Tibial artery (tissue), 4 donors: ENCODE measurements at regions of chr10 and their contacts with region 1.

Region 1: GRCh38 chr10:47311932-47312662 is 10.2 kb upstream of the GDF2 start:
- DNase-seq: peak; percentile 88 to 89
- H3K4me3 ChIP-seq: no peak overlapping the region
- H3K27ac ChIP-seq: no peak overlapping the region
- H3K4me1 ChIP-seq: peaks cover 0 to 10% (median 3%) of the 10 kb centered on the region in 4 donors
- H3K27me3 ChIP-seq: no peaks in the 10 kb centered on the region
- CTCF ChIP-seq: peak; percentile 84 to 92

Region 2: GRCh38 chr10:47024399-47025252 is 287.5 kb before region 1 on chr10:
- intact Hi-C with region 1: loop called (anchors 2 kb)
- DNase-seq: peak in 1 of 2 donors; percentile 79
- H3K4me3 ChIP-seq: no peak overlapping the region
- H3K27ac ChIP-seq: no peak overlapping the region
- H3K4me1 ChIP-seq: peaks cover 0 to 5% (median 0%) of the 10 kb centered on the region in 4 donors
- H3K27me3 ChIP-seq: no peaks in the 10 kb centered on the region
- CTCF ChIP-seq: peak; percentile 66 to 74

Region 3: DNA sequence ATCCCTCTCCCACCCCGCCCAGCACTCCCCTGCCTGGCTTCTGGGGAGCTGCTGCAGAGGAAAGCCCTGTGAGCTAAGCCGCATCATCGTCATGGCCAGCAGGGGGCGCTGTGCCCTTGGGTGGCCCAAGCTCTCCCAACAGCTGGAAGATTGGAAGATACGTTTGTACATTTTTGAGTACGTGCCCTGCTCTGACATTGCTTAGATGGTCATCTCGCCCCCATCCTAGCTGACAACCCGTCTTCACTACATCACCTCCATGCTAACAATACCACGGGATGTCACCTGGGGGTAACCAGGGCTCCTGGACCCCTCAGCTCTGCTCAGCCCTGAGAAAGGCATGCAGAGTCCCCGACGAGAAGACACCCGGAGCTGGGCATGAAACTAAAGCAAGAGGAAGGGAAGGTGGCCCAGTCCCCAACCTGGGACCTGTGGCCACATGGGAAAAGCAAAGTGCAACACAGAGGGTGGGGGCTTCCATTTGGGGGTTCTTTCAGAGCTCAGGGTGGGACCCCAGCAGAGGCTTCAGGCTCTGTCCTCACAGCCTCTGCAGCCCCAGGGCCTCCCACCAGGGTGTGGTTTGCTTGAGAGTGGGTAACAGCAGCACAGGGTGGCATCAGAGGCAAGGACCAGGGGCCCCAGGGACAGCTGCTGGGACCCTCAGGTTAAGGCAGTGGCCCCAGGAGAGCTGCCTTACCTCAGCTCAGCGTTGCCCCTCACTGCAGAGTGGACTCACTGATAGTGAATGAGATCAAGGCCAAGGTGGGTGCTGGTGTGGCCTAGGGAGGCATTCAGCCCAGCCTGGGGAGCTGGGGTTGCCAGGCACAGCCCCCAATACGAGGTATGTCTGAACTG is 264.2 kb before region 1 on chr10:
- intact Hi-C with region 1: loop called (anchors 1 kb)
- DNase-seq: peak; percentile 77 to 89
- H3K4me3 ChIP-seq: no peak overlapping the region
- H3K27ac ChIP-seq: peak overlapping the region; percentile 23 to 70
- H3K4me1 ChIP-seq: peaks cover 0 to 39% (median 30%) of the 10 kb centered on the region in 4 donors
- H3K27me3 ChIP-seq: no peaks in the 10 kb centered on the region
- CTCF ChIP-seq: peak; percentile 87 to 90

Region 4: DNA sequence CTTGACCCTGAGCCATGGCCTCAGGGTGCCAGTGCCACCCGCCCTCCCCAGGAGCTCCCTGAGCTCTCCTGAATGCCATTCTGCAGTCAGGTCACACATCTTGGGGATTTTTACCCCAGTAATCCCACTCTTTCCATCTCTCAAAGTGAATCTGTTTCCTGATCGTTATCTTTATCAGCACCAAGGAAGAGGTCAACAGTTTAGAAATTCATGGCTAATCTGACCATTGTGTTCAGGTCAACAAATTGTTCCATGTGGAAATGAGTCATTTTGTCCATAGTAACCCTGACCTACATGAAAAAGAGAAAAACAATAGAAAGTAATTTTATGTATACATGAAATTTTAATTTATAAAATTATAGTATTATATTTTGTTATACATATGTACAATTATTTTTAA is 100.8 kb after region 1 on chr10:
- intact Hi-C with region 1: no loop called
- DNase-seq: no peak
- H3K4me3 ChIP-seq: no peak overlapping the region
- H3K27ac ChIP-seq: no peak overlapping the region
- H3K4me1 ChIP-seq: no peaks in the 10 kb centered on the region
- H3K27me3 ChIP-seq: no peaks in the 10 kb centered on the region
- CTCF ChIP-seq: no peak